CD4-positive, alpha-beta T cell (primary cell): ENCODE measurements at regions of chr6 and their contacts with region 1.

Region 1: GRCh38 chr6:14066782-14067406 is 50.7 kb upstream of the CD83 start:
- DNase-seq: peak in 4 of 14 experiments; percentile 24 to 76 (median 70)
- ATAC-seq: peak; percentile 81
- H3K4me3 ChIP-seq: no peak overlapping the region
- H3K4me3 Mint-ChIP-seq: no peak overlapping the region
- H3K27ac ChIP-seq: no peak overlapping the region
- H3K27ac Mint-ChIP-seq: no peak overlapping the region
- H3K4me1 ChIP-seq: no peaks in the 10 kb centered on the region
- H3K4me1 Mint-ChIP-seq: no peaks in the 10 kb centered on the region
- H3K27me3 ChIP-seq: peaks cover 0 to 5% of the 10 kb centered on the region in 2 experiments
- H3K27me3 Mint-ChIP-seq: peaks cover 6% of the 10 kb centered on the region
- CTCF ChIP-seq: peak; percentile 70

Region 2: DNA sequence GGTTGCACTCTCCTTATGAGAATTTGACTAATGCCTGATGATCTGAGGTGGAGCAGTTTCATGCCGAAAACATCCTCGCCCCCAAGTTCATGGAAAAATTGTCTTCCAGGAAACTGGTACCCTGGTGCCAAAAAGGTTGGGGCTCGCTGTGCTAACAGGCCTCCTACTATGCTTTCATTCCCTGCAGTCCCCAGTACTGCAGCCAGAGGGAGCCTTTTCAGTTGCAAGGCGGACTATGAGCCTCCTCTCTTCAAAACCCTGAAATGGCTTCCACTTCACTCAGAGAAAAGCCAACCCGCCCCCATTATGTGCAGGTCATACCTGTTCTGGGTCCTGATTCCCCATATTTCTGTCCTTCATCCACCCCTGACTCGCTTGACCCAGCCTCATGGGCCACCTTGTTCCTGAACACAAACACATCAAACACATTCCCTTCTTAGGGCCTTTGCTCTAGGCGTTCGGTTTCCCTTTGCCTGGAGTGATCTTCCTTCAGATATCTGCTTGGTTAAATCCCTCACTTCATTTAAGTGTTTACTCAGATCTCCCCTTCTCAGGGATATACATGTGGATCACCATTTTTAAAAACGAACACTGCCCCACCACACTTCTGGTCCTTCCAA is 1176.6 kb before region 1 on chr6:
- CTCF ChIA-PET with region 1: no interaction called
- POLR2A ChIA-PET with region 1: no interaction called
- intact Hi-C with region 1: loop called in 1 of 2 experiments (anchors 10 kb)
- DNase-seq: peak in 4 of 14 experiments; percentile 1 to 20 (median 9)
- ATAC-seq: no peak
- H3K4me3 ChIP-seq: no peak overlapping the region
- H3K4me3 Mint-ChIP-seq: no peak overlapping the region
- H3K27ac ChIP-seq: no peak overlapping the region
- H3K27ac Mint-ChIP-seq: no peak overlapping the region
- H3K4me1 ChIP-seq: peaks cover 2% of the 10 kb centered on the region
- H3K4me1 Mint-ChIP-seq: no peaks in the 10 kb centered on the region
- H3K27me3 ChIP-seq: peaks cover 0 to 8% of the 10 kb centered on the region in 2 experiments
- H3K27me3 Mint-ChIP-seq: peaks cover 27% of the 10 kb centered on the region
- CTCF ChIP-seq: no peak

Region 3: GRCh38 chr6:13454286-13455221 is 612.3 kb before region 1 on chr6:
- CTCF ChIA-PET with region 1: no interaction called
- POLR2A ChIA-PET with region 1: no interaction called
- intact Hi-C with region 1: loop called in 1 of 2 experiments (anchors 5 kb)
- DNase-seq: peak; percentile 25 to 86 (median 58)
- ATAC-seq: peak; percentile 81
- H3K4me3 ChIP-seq: peak overlapping the region; percentile 12
- H3K4me3 Mint-ChIP-seq: peak overlapping the region; percentile 60
- H3K27ac ChIP-seq: peak overlapping the region; percentile 1 to 6
- H3K27ac Mint-ChIP-seq: peak overlapping the region; percentile 88
- H3K4me1 ChIP-seq: peaks cover 21% of the 10 kb centered on the region
- H3K4me1 Mint-ChIP-seq: peaks cover 27% of the 10 kb centered on the region
- H3K27me3 ChIP-seq: no peaks in the 10 kb centered on the region
- H3K27me3 Mint-ChIP-seq: no peaks in the 10 kb centered on the region
- CTCF ChIP-seq: peak; percentile 57

Region 4: GRCh38 chr6:13795041-13795750 is 271.7 kb before region 1 on chr6:
- CTCF ChIA-PET with region 1: interaction called, 7 read pairs
- POLR2A ChIA-PET with region 1: no interaction called
- intact Hi-C with region 1: loop called (anchors 1 kb)
- DNase-seq: peak; percentile 73 to 92 (median 82)
- ATAC-seq: peak; percentile 98
- H3K4me3 ChIP-seq: no peak overlapping the region
- H3K4me3 Mint-ChIP-seq: no peak overlapping the region
- H3K27ac ChIP-seq: no peak overlapping the region
- H3K27ac Mint-ChIP-seq: no peak overlapping the region
- H3K4me1 ChIP-seq: no peaks in the 10 kb centered on the region
- H3K4me1 Mint-ChIP-seq: no peaks in the 10 kb centered on the region
- H3K27me3 ChIP-seq: no peaks in the 10 kb centered on the region
- H3K27me3 Mint-ChIP-seq: no peaks in the 10 kb centered on the region
- CTCF ChIP-seq: peak; percentile 90

Region 5: GRCh38 chr6:13908955-13909381 is 157.9 kb before region 1 on chr6:
- CTCF ChIA-PET with region 1: interaction called, 13 read pairs
- POLR2A ChIA-PET with region 1: no interaction called
- intact Hi-C with region 1: loop called in 1 of 2 experiments (anchors 5 kb)
- DNase-seq: peak in 13 of 14 experiments; percentile 5 to 82 (median 25)
- ATAC-seq: peak; percentile 59
- H3K4me3 ChIP-seq: no peak overlapping the region
- H3K4me3 Mint-ChIP-seq: no peak overlapping the region
- H3K27ac ChIP-seq: no peak overlapping the region
- H3K27ac Mint-ChIP-seq: no peak overlapping the region
- H3K4me1 ChIP-seq: peaks cover 3% of the 10 kb centered on the region
- H3K4me1 Mint-ChIP-seq: peaks cover 7% of the 10 kb centered on the region
- H3K27me3 ChIP-seq: peaks cover 5 to 13% of the 10 kb centered on the region in 2 experiments
- H3K27me3 Mint-ChIP-seq: peaks cover 50% of the 10 kb centered on the region
- CTCF ChIP-seq: peak; percentile 69

Region 6: GRCh38 chr6:13914351-13914750 is 152.5 kb before region 1 on chr6:
- CTCF ChIA-PET with region 1: interaction called, 13 read pairs
- POLR2A ChIA-PET with region 1: no interaction called
- intact Hi-C with region 1: loop called in 1 of 2 experiments (anchors 5 kb)
- DNase-seq: no peak
- ATAC-seq: no peak
- H3K4me3 ChIP-seq: no peak overlapping the region
- H3K4me3 Mint-ChIP-seq: no peak overlapping the region
- H3K27ac ChIP-seq: no peak overlapping the region
- H3K27ac Mint-ChIP-seq: no peak overlapping the region
- H3K4me1 ChIP-seq: no peaks in the 10 kb centered on the region
- H3K4me1 Mint-ChIP-seq: no peaks in the 10 kb centered on the region
- H3K27me3 ChIP-seq: peaks cover 5% of the 10 kb centered on the region in 2 experiments
- H3K27me3 Mint-ChIP-seq: peaks cover 42% of the 10 kb centered on the region
- CTCF ChIP-seq: no peak

Region 7: DNA sequence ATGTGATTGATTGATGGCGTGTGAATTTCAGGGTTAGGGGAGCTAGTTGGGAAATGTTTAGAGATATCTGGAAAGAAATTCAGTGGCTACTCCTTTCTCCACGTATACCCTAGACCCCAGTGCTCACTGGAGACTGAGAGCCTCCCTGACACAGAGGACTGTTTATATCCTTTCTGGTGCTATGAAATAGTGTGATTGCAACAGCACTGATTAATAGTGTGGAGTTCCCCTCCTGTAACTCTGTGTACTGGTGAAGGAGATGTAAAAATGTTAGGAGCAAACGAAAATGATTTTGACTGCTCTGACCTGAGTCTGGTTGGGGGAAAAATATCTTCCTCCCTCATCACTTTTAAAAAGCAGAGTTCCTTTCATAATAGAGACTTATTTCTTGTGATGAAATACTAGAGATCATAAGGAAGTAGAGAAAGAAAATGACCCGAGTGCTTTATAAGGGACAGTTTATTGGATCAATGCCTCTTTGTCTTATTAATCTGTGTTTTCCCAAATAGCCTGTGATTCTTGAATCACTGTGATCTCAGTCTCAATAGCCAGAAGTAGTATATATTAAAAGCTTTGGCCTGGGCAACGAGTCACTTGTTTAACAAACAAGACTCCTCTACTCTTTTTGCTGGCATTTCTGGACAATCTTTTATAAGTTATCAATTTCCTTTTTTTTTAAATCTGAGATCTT is 49.8 kb before region 1 on chr6:
- CTCF ChIA-PET with region 1: no interaction called
- POLR2A ChIA-PET with region 1: no interaction called
- intact Hi-C with region 1: no loop called
- DNase-seq: no peak
- ATAC-seq: no peak
- H3K4me3 ChIP-seq: no peak overlapping the region
- H3K4me3 Mint-ChIP-seq: no peak overlapping the region
- H3K27ac ChIP-seq: no peak overlapping the region
- H3K27ac Mint-ChIP-seq: no peak overlapping the region
- H3K4me1 ChIP-seq: no peaks in the 10 kb centered on the region
- H3K4me1 Mint-ChIP-seq: no peaks in the 10 kb centered on the region
- H3K27me3 ChIP-seq: peaks cover 0 to 7% of the 10 kb centered on the region in 2 experiments
- H3K27me3 Mint-ChIP-seq: peaks cover 7% of the 10 kb centered on the region
- CTCF ChIP-seq: no peak

Region 8: DNA sequence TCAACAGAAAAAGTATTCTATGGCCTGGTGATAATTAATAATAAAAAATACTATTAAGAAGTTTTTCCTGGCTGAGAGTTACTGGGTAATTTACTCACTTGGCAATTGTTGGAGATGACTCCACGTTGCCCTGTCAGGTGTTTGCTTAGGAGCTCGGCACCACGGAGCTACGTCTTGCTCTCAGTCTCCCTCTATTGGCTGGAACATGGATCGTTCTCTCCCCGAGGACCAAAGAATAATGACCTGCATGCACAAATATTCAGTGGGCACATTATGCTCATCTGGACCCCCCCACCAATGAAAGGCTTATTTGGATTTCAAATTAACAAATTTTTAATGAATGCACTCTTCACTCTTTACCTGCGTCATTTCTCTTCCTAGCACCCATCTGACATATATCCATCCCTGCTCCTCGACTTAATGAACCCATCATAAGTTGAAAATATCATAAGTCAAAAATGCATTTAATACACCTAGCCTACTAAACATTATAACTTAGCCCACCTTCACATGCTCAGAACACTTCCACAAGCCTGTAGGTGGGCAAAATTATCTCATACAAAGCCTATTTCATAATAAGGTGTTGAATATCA is 20.3 kb before region 1 on chr6:
- CTCF ChIA-PET with region 1: interaction called, 10 read pairs
- POLR2A ChIA-PET with region 1: no interaction called
- intact Hi-C with region 1: no loop called
- DNase-seq: peak; percentile 3 to 74 (median 19)
- ATAC-seq: peak; percentile 72
- H3K4me3 ChIP-seq: no peak overlapping the region
- H3K4me3 Mint-ChIP-seq: no peak overlapping the region
- H3K27ac ChIP-seq: no peak overlapping the region
- H3K27ac Mint-ChIP-seq: no peak overlapping the region
- H3K4me1 ChIP-seq: no peaks in the 10 kb centered on the region
- H3K4me1 Mint-ChIP-seq: no peaks in the 10 kb centered on the region
- H3K27me3 ChIP-seq: no peaks in the 10 kb centered on the region
- H3K27me3 Mint-ChIP-seq: peaks cover 34% of the 10 kb centered on the region
- CTCF ChIP-seq: peak; percentile 76